ENCODE measurements at regions of chr9 and their contacts with region 1.

Region 1: GRCh38 chr9:20319641-20320337 is 302.5 kb downstream of the MLLT3 start:
- DNase-seq: peak in 6 of 14 experiments; percentile 7 to 40 (median 18)
- ATAC-seq: no peak
- H3K4me3 ChIP-seq: no peak overlapping the region
- H3K4me3 Mint-ChIP-seq: no peak overlapping the region
- H3K27ac ChIP-seq: no peak overlapping the region
- H3K27ac Mint-ChIP-seq: peak overlapping the region; percentile 89
- H3K4me1 ChIP-seq: peaks cover 88% of the 10 kb centered on the region
- H3K4me1 Mint-ChIP-seq: peaks cover 88% of the 10 kb centered on the region
- H3K27me3 ChIP-seq: no peaks in the 10 kb centered on the region
- H3K27me3 Mint-ChIP-seq: no peaks in the 10 kb centered on the region
- CTCF ChIP-seq: no peak

Region 2: DNA sequence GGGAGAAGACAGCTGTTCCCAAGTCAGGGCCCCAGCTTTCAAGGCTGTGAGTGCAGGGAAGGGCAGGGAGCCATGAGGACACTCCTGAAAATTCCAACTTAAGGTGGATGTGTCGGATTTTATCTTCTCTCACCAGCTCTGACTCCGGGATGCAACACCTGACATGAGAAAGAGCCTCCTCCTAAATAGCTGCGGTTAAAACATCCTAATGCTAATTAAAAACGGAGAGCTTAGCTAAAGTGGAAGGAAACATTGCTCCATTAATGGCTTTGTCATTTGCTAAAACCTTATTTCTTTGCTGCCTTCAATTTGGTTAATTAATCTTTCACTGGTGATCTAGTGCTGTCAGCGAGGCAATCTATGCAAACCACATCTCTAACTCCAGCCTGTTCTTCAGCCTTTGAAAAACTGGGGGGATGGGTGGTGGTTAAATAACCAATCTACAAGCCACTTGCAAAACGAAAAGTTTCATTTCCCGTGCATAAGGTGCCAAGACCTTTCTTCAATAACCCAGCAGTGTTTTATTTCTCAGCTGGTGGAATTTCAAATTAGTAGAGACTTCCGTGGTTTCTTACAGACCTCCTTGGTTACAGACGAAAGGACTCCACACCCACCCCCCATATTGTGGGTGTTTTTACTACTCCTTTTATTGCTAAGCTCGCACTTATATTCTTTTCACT is 77.1 kb before region 1 on chr9:
- CTCF ChIA-PET with region 1: no interaction called
- POLR2A ChIA-PET with region 1: interaction called, 11 read pairs
- intact Hi-C with region 1: no loop called
- DNase-seq: peak in 8 of 14 experiments; percentile 9 to 78 (median 38)
- ATAC-seq: peak; percentile 89
- H3K4me3 ChIP-seq: peak overlapping the region; percentile 39
- H3K4me3 Mint-ChIP-seq: peak overlapping the region; percentile 72
- H3K27ac ChIP-seq: peak overlapping the region; percentile 14 to 56
- H3K27ac Mint-ChIP-seq: peak overlapping the region; percentile 60
- H3K4me1 ChIP-seq: peaks cover 27% of the 10 kb centered on the region
- H3K4me1 Mint-ChIP-seq: peaks cover 66% of the 10 kb centered on the region
- H3K27me3 ChIP-seq: no peaks in the 10 kb centered on the region
- H3K27me3 Mint-ChIP-seq: no peaks in the 10 kb centered on the region
- CTCF ChIP-seq: no peak

Region 3: GRCh38 chr9:20297646-20298084 is 22.1 kb before region 1 on chr9:
- CTCF ChIA-PET with region 1: no interaction called
- POLR2A ChIA-PET with region 1: interaction called, 14 read pairs
- intact Hi-C with region 1: no loop called
- DNase-seq: no peak
- ATAC-seq: no peak
- H3K4me3 ChIP-seq: no peak overlapping the region
- H3K4me3 Mint-ChIP-seq: no peak overlapping the region
- H3K27ac ChIP-seq: no peak overlapping the region
- H3K27ac Mint-ChIP-seq: no peak overlapping the region
- H3K4me1 ChIP-seq: peaks cover 8% of the 10 kb centered on the region
- H3K4me1 Mint-ChIP-seq: peaks cover 38% of the 10 kb centered on the region
- H3K27me3 ChIP-seq: no peaks in the 10 kb centered on the region
- H3K27me3 Mint-ChIP-seq: no peaks in the 10 kb centered on the region
- CTCF ChIP-seq: no peak

Region 4: DNA sequence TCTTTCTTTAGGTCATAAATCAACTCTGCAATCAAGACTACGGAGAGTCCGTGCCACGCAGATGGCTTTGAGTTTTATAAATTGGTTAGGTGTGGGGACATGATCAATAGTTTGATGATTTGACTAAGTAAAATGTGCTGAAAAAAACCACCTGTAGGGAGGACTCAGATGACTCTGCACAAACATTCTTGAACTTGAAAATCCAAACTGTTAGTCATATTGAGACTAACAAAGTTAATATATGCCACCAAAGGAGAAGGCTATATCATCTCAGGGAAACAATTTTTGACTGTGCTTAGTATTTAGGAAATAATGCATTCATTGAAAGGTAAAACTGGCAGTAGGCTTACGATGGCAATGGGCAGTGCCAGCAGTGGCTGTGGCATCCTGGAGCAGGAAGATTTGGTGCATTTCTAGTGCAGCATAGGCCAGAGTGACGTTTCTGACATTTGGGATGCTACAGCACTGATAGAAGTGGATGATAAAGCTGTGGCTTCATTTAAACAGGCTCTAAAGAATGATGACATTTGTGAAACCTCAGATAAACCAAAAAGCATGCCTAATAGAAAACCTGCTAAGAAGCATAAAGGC is 11.4 kb after region 1 on chr9:
- CTCF ChIA-PET with region 1: no interaction called
- POLR2A ChIA-PET with region 1: interaction called, 21 read pairs
- intact Hi-C with region 1: no loop called
- DNase-seq: no peak
- ATAC-seq: no peak
- H3K4me3 ChIP-seq: no peak overlapping the region
- H3K4me3 Mint-ChIP-seq: no peak overlapping the region
- H3K27ac ChIP-seq: no peak overlapping the region
- H3K27ac Mint-ChIP-seq: no peak overlapping the region
- H3K4me1 ChIP-seq: no peaks in the 10 kb centered on the region
- H3K4me1 Mint-ChIP-seq: peaks cover 13% of the 10 kb centered on the region
- H3K27me3 ChIP-seq: no peaks in the 10 kb centered on the region
- H3K27me3 Mint-ChIP-seq: no peaks in the 10 kb centered on the region
- CTCF ChIP-seq: no peak

Region 5: GRCh38 chr9:20684035-20684872 is 364.5 kb after region 1 on chr9 and contains the start of gene FOCAD:
- CTCF ChIA-PET with region 1: no interaction called
- POLR2A ChIA-PET with region 1: interaction called, 10 read pairs
- intact Hi-C with region 1: no loop called
- DNase-seq: peak; percentile 88 to 98 (median 94)
- ATAC-seq: peak; percentile 97
- H3K4me3 ChIP-seq: peak within 1 kb of the TSS; percentile 93
- H3K4me3 Mint-ChIP-seq: peak within 1 kb of the TSS; percentile 90
- H3K27ac ChIP-seq: peak within 1 kb of the TSS; percentile 50 to 71
- H3K27ac Mint-ChIP-seq: peak within 1 kb of the TSS; percentile 75
- H3K4me1 ChIP-seq: peaks cover 18% of the 10 kb centered on the region
- H3K4me1 Mint-ChIP-seq: peaks cover 19% of the 10 kb centered on the region
- H3K27me3 ChIP-seq: no peaks in the 10 kb centered on the region
- H3K27me3 Mint-ChIP-seq: no peaks in the 10 kb centered on the region
- CTCF ChIP-seq: no peak
- total RNA-seq, gene FOCAD: 12.4 to 14.1 TPM

Measured in CD4-positive, alpha-beta T cell (primary cell).